OCI-LY7 (cell line): ENCODE measurements at regions of chr14 and their contacts with region 1.

Region 1: GRCh38 chr14:22556990-22557623 is 31.9 kb downstream of the DAD1 start:
- DNase-seq: peak; percentile 93
- H3K4me3 ChIP-seq: peak overlapping the region; percentile 57
- H3K27ac ChIP-seq: peak overlapping the region; percentile 97
- H3K4me1 ChIP-seq: peaks cover 91% of the 10 kb centered on the region
- CTCF ChIP-seq: peak; percentile 100

Region 2: GRCh38 chr14:22386924-22387775 is 170.0 kb before region 1 on chr14:
- CTCF ChIA-PET with region 1: interaction called, 10 read pairs
- POLR2A ChIA-PET with region 1: interaction called, 11 read pairs
- intact Hi-C with region 1: loop called (anchors 1 kb)
- DNase-seq: peak; percentile 93
- H3K4me3 ChIP-seq: peak overlapping the region; percentile 33
- H3K27ac ChIP-seq: peak overlapping the region; percentile 49
- H3K4me1 ChIP-seq: peaks cover 94% of the 10 kb centered on the region
- CTCF ChIP-seq: peak; percentile 94

Region 3: DNA sequence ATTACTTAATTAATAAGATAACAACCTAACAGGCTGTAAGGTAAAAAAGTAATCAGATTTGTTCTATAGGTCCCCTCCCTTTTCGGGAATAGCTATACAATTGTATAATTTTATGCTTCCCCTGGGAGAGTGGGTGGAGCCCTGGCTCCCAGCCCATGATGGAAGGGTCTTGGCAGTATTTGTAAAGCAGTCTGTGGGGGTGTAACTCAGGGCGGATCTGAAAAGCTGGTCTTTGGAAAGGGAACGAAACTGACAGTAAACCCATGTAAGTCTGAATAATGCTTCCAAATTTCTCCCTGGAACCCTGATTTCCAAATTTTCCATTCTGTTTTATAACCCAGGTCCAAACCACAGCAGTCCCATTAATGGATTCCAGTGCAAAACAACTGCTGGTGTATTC is 78.4 kb before region 1 on chr14:
- CTCF ChIA-PET with region 1: interaction called, 3 read pairs
- POLR2A ChIA-PET with region 1: interaction called, 17 read pairs
- intact Hi-C with region 1: loop called (anchors 1 kb)
- DNase-seq: no peak
- H3K4me3 ChIP-seq: peak overlapping the region; percentile 53
- H3K27ac ChIP-seq: peak overlapping the region; percentile 81
- H3K4me1 ChIP-seq: peaks cover 100% of the 10 kb centered on the region
- CTCF ChIP-seq: no peak

Region 4: DNA sequence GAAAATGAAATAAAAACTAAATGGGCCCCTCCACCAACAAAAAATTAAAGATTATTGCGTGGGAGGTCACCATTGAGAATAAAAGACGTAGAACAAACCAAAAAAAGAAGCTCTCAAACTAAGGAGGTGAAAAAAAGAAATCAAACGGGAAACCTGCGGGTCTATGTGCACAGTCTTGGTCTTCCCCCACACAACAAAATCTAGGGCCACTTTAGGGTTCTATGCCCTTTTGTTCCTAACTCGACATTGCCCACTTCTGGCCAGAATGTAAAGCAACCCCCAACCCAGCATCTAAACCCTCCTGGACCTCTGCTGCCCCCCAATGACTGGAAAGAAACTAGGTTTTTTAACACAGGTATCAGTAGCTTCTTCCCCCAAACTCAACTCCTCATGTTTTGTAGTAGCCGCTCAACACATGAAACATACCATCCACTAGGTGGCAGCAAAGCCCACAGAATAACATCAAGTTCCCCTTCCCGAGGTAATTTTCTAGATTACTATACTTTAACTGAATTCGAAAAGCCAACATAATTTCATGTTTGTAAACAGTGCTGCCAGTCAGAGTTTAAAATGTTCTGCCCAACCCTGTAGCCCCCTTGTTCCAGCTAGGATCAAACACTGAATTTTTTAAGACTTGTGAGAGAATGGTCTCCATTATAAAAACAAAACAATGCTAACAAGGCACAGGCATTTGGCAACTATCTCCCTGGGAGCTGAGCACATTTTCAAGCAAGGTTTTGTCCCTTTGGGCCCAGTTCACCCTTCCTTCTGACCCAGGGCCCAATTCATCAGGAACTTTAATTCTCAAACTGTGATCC is 13.2 kb after region 1 on chr14:
- CTCF ChIA-PET with region 1: interaction called, 19 read pairs
- POLR2A ChIA-PET with region 1: interaction called, 21 read pairs
- intact Hi-C with region 1: loop called (anchors 1 kb)
- DNase-seq: peak; percentile 98
- H3K4me3 ChIP-seq: peak overlapping the region; percentile 65
- H3K27ac ChIP-seq: peak overlapping the region; percentile 83
- H3K4me1 ChIP-seq: peaks cover 56% of the 10 kb centered on the region
- CTCF ChIP-seq: peak; percentile 100

Region 5: DNA sequence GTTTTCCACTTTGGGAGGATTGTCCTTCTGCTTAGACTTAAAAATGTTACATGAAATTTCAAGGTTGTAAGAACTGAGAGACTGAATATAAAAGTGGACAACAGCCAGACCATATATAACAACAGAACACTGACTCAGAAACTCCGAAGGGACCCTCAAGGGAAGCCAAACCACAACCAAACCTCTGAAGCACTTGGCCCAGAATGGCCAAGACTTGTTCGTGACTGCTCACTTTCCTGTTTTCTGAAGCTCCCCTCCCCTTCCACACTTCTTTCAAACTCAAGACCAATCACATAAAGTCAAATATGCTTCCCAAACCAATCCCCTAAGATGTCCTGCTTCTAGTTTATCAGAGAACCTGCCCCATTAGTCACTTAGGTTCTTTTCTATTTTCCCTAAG is 73.4 kb after region 1 on chr14:
- CTCF ChIA-PET with region 1: no interaction called
- POLR2A ChIA-PET with region 1: no interaction called
- intact Hi-C with region 1: no loop called
- DNase-seq: no peak
- H3K4me3 ChIP-seq: no peak overlapping the region
- H3K27ac ChIP-seq: no peak overlapping the region
- H3K4me1 ChIP-seq: no peaks in the 10 kb centered on the region
- CTCF ChIP-seq: no peak

Region 6: GRCh38 chr14:22822571-22823098 is 265.5 kb after region 1 on chr14:
- CTCF ChIA-PET with region 1: no interaction called
- POLR2A ChIA-PET with region 1: interaction called, 4 read pairs
- intact Hi-C with region 1: loop called (anchors 5 kb)
- DNase-seq: peak; percentile 83
- H3K4me3 ChIP-seq: peak overlapping the region; percentile 58
- H3K27ac ChIP-seq: peak overlapping the region; percentile 82
- H3K4me1 ChIP-seq: peaks cover 78% of the 10 kb centered on the region
- CTCF ChIP-seq: peak; percentile 90

Region 7: DNA sequence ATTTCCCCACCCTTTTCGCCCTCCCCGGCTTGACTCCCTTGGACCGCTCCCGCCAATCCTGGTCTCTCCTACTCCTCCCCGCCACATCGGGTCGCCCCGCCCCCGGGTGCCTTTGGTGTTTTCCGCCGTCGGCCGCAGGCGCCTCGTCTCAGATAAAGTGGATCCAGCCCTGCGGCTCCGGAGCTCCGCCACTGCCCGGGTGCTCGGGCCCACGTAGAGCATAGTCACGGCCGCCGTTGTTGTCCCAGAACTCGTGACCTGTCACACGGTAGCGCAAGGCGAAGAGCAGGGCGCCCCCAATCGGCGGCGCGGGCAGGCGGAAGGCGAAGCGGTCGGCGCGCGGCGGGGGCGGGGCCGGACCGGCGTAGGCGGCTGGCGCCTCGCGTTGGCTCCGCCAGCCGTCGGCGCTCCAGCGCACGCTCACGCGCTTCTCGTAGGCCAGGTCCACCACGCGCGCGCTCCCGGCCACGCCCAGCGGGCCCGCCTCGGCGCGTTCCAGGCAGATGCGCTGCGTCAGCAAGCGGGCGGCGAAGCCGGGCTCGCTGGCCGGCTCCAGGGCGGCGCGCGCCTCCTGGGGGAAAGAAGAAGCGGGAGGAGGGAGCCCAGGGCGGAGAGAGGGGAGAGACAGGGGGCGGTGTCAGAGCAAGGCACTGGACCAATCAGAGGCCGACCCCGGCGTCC is 744.3 kb after region 1 on chr14:
- CTCF ChIA-PET with region 1: no interaction called
- POLR2A ChIA-PET with region 1: no interaction called
- intact Hi-C with region 1: loop called (anchors 5 kb)
- DNase-seq: peak; percentile 99
- H3K4me3 ChIP-seq: peak overlapping the region; percentile 96
- H3K27ac ChIP-seq: peak overlapping the region; percentile 88
- H3K4me1 ChIP-seq: peaks cover 34% of the 10 kb centered on the region
- CTCF ChIP-seq: peak; percentile 79